Activated T-helper 2 cell treated with anti-CD3 and anti-CD28 coated beads, Interferon-gamma antibody, Interleukin-2, Interleukin-4, amounts not matched to agents 10 μg/mL and 5 μg/mL and 100 μg/mL, durations not matched to agents 14 hours and 24 hours and 36 hours (primary cell): ENCODE measurements at regions of chr2 and their contacts with region 1.

Region 1: GRCh38 chr2:25376750-25377621 is 35.3 kb upstream of the DNMT3A start:
- DNase-seq: peak; percentile 90
- H3K4me3 Mint-ChIP-seq: peak overlapping the region; percentile 62
- H3K27ac Mint-ChIP-seq: peak overlapping the region; percentile 98
- H3K4me1 Mint-ChIP-seq: peaks cover 30% of the 10 kb centered on the region
- H3K27me3 Mint-ChIP-seq: no peaks in the 10 kb centered on the region

Region 2: GRCh38 chr2:25314514-25315315 is 62.3 kb before region 1 on chr2:
- intact Hi-C with region 1: loop called (anchors 2 kb)
- DNase-seq: peak; percentile 72
- H3K4me3 Mint-ChIP-seq: peak overlapping the region; percentile 86
- H3K27ac Mint-ChIP-seq: peak overlapping the region; percentile 97
- H3K4me1 Mint-ChIP-seq: peaks cover 53% of the 10 kb centered on the region
- H3K27me3 Mint-ChIP-seq: no peaks in the 10 kb centered on the region

Region 3: GRCh38 chr2:25362049-25362433 is 14.9 kb before region 1 on chr2:
- intact Hi-C with region 1: loop called (anchors 2 kb)
- DNase-seq: peak; percentile 93
- H3K4me3 Mint-ChIP-seq: peak overlapping the region; percentile 81
- H3K27ac Mint-ChIP-seq: peak overlapping the region; percentile 92
- H3K4me1 Mint-ChIP-seq: peaks cover 8% of the 10 kb centered on the region
- H3K27me3 Mint-ChIP-seq: no peaks in the 10 kb centered on the region

Region 4: DNA sequence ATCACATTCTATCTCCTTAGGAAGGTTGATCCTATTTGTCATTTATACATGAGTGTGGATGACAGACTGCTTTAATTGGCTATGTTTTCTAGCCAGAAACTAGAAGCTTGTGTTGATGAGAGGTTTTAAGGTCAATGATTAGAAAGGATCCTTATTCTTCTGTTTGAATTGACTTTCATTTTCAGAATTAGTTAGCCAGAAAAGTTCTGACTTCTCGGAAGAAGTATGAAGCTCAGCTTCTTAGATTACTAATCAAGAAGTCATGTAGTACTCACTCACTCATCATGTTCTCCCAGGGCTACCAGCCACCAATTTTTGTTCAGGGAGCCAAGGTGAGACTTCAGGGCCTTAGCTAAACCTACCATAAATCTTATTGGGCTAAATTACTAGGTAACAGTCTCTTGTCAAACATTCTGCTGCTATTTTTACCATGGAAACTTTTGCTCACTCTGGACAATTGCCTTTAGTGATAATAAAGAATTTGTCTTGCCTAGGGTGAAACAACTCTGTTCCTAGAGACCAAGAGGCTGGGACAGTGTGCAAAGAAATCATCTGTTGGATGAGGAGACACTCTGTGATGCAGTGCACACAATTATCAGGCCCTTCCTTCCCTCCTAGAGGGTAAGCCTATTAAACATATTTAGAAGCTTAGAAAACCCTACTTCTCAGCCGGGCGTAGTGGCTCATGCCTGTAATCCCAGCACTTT is 76.4 kb after region 1 on chr2:
- intact Hi-C with region 1: loop called (anchors 5 kb)
- DNase-seq: peak; percentile 21
- H3K4me3 Mint-ChIP-seq: peak overlapping the region; percentile 21
- H3K27ac Mint-ChIP-seq: peak overlapping the region; percentile 89
- H3K4me1 Mint-ChIP-seq: peaks cover 32% of the 10 kb centered on the region
- H3K27me3 Mint-ChIP-seq: no peaks in the 10 kb centered on the region

Region 5: GRCh38 chr2:25521665-25522387 is 144.8 kb after region 1 on chr2:
- intact Hi-C with region 1: loop called (anchors 1 kb)
- DNase-seq: peak; percentile 26
- H3K4me3 Mint-ChIP-seq: peak overlapping the region; percentile 17
- H3K27ac Mint-ChIP-seq: peak overlapping the region; percentile 50
- H3K4me1 Mint-ChIP-seq: peaks cover 20% of the 10 kb centered on the region
- H3K27me3 Mint-ChIP-seq: no peaks in the 10 kb centered on the region